Ascending aorta (tissue), 2 donors: ENCODE measurements at regions of chr2 and their contacts with region 1.

Region 1: GRCh38 chr2:3558205-3559014 is at the start of gene RNASEH1:
- DNase-seq: peak; percentile 90 to 99
- H3K4me3 ChIP-seq: peak within 1 kb of the TSS; percentile 84 to 94
- H3K27ac ChIP-seq: peak within 1 kb of the TSS; percentile 92 to 97
- H3K4me1 ChIP-seq: peaks cover 4 to 10% of the 10 kb centered on the region in 2 donors
- H3K27me3 ChIP-seq: no peaks in the 10 kb centered on the region
- CTCF ChIP-seq: no peak
- total RNA-seq, gene RNASEH1: 9.3 TPM

Region 2: DNA sequence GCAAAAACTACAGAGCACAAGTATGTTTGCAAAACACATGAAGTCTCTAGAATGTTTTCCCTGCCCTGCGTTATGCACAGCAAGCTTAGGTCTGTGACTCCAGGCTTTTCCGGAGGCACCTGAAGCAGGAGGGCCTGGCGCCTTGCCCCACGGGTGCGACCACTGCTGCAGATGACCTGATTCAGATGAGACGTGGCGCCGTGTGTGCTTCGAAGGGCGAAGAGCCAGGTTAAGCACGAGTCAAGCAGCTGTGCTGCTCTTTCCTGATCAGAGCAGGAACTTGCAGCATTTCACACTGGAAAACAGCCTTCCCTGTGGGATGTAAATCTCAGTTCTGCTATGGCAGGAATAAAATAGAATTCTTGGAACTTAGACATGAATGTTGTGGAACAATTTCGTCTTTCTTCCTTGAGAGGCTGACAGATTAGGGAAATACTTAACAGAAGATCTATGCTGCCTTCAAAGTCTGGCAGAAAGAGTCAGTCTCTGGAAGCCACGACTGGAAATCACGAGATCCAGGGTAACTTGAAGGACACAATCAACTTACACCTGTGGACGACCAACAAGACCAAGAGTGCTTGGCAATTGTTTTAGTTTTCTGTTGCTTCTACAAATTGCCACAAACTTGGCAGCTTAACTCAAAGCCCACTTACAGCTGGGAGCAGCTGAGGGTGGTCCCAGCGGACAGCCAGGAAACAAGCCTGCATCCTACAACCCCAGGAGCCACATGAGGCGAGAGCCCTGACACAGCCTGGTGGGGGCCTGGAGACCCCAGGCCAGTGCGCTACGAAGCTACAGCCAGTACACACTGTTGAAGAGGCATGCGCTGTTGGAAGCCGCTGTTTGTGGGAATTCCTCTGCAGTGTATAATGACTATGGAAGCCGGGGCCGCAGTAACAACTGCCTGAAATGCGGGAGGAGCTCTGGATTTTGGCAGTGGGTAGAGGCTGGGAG is 223.7 kb before region 1 on chr2:
- intact Hi-C with region 1: no loop called
- DNase-seq: no peak
- H3K4me3 ChIP-seq: no peak overlapping the region
- H3K27ac ChIP-seq: no peak overlapping the region
- H3K4me1 ChIP-seq: no peaks in the 10 kb centered on the region
- H3K27me3 ChIP-seq: no peaks in the 10 kb centered on the region
- CTCF ChIP-seq: no peak

Region 3: GRCh38 chr2:3379647-3380534 is 178.5 kb before region 1 on chr2 and contains the start of gene TRAPPC12:
- intact Hi-C with region 1: loop called (anchors 1 kb)
- DNase-seq: peak; percentile 57 to 95
- H3K4me3 ChIP-seq: peak within 1 kb of the TSS; percentile 77 to 81
- H3K27ac ChIP-seq: peak within 1 kb of the TSS; percentile 86 to 95
- H3K4me1 ChIP-seq: peaks cover 3 to 19% of the 10 kb centered on the region in 2 donors
- H3K27me3 ChIP-seq: no peaks in the 10 kb centered on the region
- CTCF ChIP-seq: peak in 2 of 3 experiments; percentile 20 to 54
- total RNA-seq, gene TRAPPC12: 94.0 TPM

Region 4: DNA sequence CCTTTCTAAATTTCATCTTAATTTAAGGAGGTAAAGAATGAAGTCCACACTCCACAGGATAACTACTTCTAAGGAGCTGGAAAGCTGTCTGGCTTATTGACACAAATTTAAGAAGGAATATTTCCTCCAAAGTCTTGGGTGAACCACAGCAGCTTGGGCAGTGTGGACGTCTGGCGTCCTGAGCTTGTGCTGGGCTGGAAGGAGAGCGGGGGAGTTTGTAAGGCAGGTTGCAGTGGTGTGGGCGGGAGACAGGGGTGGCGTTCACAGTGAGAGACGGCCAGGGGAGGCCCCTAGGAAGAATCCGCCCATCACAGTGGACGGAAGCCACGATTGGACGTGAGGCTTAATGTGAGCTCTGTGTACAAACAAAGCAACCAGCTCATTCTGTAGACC is 64.8 kb before region 1 on chr2:
- intact Hi-C with region 1: loop called (anchors 1 kb)
- DNase-seq: no peak
- H3K4me3 ChIP-seq: peak overlapping the region; percentile 21 to 55
- H3K27ac ChIP-seq: peak overlapping the region; percentile 90 to 93
- H3K4me1 ChIP-seq: peaks cover 6 to 16% of the 10 kb centered on the region in 2 donors
- H3K27me3 ChIP-seq: no peaks in the 10 kb centered on the region
- CTCF ChIP-seq: no peak

Region 5: GRCh38 chr2:3536682-3537632 is 21.5 kb before region 1 on chr2:
- intact Hi-C with region 1: loop called (anchors 1 kb)
- DNase-seq: peak in 1 of 2 donors; percentile 77
- H3K4me3 ChIP-seq: peak overlapping the region; percentile 46 to 61
- H3K27ac ChIP-seq: peak overlapping the region; percentile 95 to 96
- H3K4me1 ChIP-seq: peaks cover 3 to 18% of the 10 kb centered on the region in 2 donors
- H3K27me3 ChIP-seq: no peaks in the 10 kb centered on the region
- CTCF ChIP-seq: peak; percentile 46 to 57 (median 47)

Region 6: GRCh38 chr2:3651691-3652648 is 93.6 kb after region 1 on chr2:
- intact Hi-C with region 1: loop called (anchors 5 kb)
- DNase-seq: no peak
- H3K4me3 ChIP-seq: peak overlapping the region; percentile 17 to 55
- H3K27ac ChIP-seq: peak overlapping the region; percentile 13 to 37
- H3K4me1 ChIP-seq: peaks cover 3 to 5% of the 10 kb centered on the region in 2 donors
- H3K27me3 ChIP-seq: no peaks in the 10 kb centered on the region
- CTCF ChIP-seq: no peak